ENCODE measurements at regions of chr1 and their contacts with region 1.

Region 1: DNA sequence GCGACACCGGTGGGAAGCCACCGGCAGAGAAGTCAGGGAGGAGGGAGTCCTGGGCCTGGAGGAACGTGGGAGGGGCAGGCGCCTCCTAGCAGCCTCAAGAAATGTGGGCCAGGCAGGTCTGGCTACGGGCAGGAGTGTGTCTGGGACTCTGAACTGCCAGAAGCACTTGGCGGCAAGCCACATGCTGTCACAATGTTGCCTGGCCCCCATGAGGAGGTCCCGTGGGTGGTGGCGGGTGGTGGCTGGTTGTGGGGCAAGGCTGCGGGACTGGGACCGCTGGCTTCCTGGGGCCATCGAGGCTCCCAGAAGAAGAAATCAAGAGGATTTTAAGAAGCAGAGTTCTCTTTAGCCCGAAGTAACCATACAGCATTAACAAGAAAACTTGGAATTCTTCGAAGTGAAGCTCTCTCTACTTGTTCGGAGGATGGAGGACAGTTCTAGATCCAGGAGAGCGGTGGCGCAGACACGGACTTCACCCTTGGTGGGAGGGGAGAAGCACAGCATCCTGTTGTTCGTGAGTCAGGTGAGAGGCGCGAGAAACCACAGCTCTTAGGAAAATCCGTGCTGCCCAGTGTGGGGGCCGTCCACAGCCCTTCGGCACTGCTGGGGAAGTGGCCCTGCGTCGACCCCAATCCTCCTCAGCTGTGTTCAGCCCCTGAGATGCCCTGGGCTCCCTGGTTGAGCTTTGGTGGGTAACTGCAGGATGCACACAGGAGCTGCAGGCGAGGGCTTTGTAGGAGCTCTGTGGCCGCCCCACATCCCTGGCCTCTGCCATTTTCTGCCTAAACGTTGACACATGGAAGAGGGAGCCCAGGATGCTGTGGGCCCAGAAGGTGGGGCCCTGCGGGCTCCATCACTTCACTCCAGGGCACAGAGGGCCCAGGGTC is 12.4 kb downstream of the SKI start:
- DNase-seq: peak; percentile 90 to 93
- ATAC-seq: peak; percentile 54
- H3K4me3 ChIP-seq: no peak overlapping the region
- H3K27ac ChIP-seq: peak overlapping the region in 1 of 2 donors; percentile 11
- H3K4me1 ChIP-seq: peaks cover 0 to 2% of the 10 kb centered on the region in 2 donors
- H3K27me3 ChIP-seq: no peaks in the 10 kb centered on the region

Region 2: DNA sequence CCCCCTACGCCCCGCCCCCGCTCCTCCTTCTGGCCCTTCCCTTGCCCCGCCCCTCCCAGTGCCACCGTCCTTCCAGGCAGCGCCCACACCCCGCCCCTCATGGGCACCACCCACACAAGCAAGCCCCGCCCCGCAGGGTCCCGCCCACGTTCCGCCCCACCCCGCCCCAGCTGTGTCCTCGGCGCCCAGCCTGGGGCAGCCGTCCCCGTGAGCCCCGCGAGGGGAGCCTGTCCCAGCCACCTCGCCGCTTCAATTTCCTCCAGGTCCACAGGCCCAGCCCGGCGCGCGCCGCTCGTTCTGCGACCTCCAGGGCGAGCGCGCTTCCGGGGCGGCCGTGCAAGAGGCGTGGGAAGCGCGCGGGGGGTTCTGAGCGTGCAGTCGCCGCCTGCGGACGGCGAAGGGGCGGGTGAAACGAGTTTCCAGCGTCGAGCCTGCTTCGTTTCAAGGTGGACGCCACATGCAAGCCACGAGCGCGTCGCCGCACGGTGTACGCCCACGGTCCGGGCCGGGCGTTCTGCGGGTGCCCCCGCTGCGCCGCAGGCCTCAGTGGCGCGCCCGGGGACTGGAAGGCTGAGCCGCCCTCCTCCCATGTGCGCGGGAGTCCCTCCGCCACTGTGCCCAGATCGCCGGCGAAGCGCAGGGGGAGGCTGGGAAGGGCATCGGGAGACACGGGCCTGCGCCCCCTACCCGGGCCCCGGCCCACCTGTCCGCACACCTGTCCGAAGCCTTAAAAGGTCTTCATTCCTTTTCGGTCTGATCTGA is 35.1 kb before region 1 on chr1:
- intact Hi-C with region 1: loop called in 1 of 2 experiments (anchors 5 kb)
- DNase-seq: peak; percentile 98 to 99
- ATAC-seq: peak; percentile 81
- H3K4me3 ChIP-seq: no peak overlapping the region
- H3K27ac ChIP-seq: peak overlapping the region; percentile 58 to 88
- H3K4me1 ChIP-seq: no peaks in the 10 kb centered on the region
- H3K27me3 ChIP-seq: no peaks in the 10 kb centered on the region